Heart right ventricle (tissue), 16 donors: ENCODE measurements at regions of chrX and their contacts with region 1.

Region 1: GRCh38 chrX:99522446-99522845 is 887.6 kb downstream of the PCDH19 start:
- DNase-seq: no peak
- ATAC-seq: no peak
- H3K4me3 ChIP-seq: no peak overlapping the region
- H3K27ac ChIP-seq: no peak overlapping the region
- H3K4me1 ChIP-seq: no peaks in the 10 kb centered on the region
- H3K27me3 ChIP-seq: no peaks in the 10 kb centered on the region
- CTCF ChIP-seq: no peak

Region 2: GRCh38 chrX:99469439-99469838 is 53.0 kb before region 1 on chrX:
- intact Hi-C with region 1: loop called in 1 of 10 experiments (anchors 10 kb)
- DNase-seq: no peak
- ATAC-seq: no peak
- H3K4me3 ChIP-seq: no peak overlapping the region
- H3K27ac ChIP-seq: no peak overlapping the region
- H3K4me1 ChIP-seq: no peaks in the 10 kb centered on the region
- H3K27me3 ChIP-seq: no peaks in the 10 kb centered on the region
- CTCF ChIP-seq: no peak

Region 3: GRCh38 chrX:99938464-99938863 is 416.0 kb after region 1 on chrX:
- intact Hi-C with region 1: no loop called
- DNase-seq: no peak
- ATAC-seq: no peak
- H3K4me3 ChIP-seq: no peak overlapping the region
- H3K27ac ChIP-seq: no peak overlapping the region
- H3K4me1 ChIP-seq: no peaks in the 10 kb centered on the region
- H3K27me3 ChIP-seq: peaks cover 0 to 14% (median 0%) of the 10 kb centered on the region in 7 donors
- CTCF ChIP-seq: no peak